Panc1 (cell line): ENCODE measurements at regions of chr10 and their contacts with region 1.

Region 1: DNA sequence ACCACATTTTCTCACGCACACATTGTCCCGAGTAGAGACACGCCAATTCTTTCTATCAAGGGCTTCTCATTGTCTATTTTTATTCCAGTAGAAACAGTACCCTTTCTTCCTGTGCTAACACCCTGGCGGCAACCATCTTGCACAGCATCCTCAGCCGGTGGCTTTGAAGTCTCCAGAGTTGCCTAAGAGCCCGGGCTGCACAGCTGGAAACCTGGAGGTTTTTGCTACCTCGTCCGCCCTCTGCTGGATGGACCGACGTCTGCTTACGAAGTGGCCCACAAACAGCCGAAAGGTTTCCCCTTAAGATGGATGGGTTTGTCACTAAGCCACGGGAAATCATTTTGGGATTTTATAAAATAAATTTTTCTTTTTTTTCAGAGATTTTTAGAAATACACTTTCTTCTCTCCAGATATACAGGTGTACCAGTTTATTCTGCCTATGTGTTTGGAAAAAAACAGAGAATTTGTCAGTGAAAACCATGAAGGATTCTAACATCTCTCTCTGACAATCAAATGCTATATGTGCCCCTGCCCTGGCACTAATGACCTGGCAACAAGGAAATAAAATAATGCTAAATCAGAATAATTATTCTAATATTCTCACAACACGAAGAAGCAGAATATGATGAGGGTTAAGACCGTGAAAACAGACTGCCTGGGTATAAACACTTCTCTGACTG is 81.8 kb upstream of the FAM204A start:
- DNase-seq: peak; percentile 42
- ATAC-seq: peak; percentile 99
- H3K4me3 ChIP-seq: no peak overlapping the region
- H3K27ac ChIP-seq: no peak overlapping the region
- H3K4me1 ChIP-seq: peaks cover 7% of the 10 kb centered on the region; the same call in 1 of the 2 replicates
- H3K27me3 ChIP-seq: peaks cover 19% of the 10 kb centered on the region
- CTCF ChIP-seq: peak; percentile 94

Region 2: GRCh38 chr10:118259288-118259906 is 164.5 kb before region 1 on chr10:
- CTCF ChIA-PET with region 1: interaction called, 4 read pairs
- POLR2A ChIA-PET with region 1: no interaction called
- in situ Hi-C with region 1: no loop called
- intact Hi-C with region 1: loop called (anchors 10 kb)
- DNase-seq: no peak
- ATAC-seq: peak; percentile 85
- H3K4me3 ChIP-seq: no peak overlapping the region
- H3K27ac ChIP-seq: no peak overlapping the region
- H3K4me1 ChIP-seq: no peaks in the 10 kb centered on the region
- H3K27me3 ChIP-seq: peaks cover 60% of the 10 kb centered on the region
- CTCF ChIP-seq: peak; percentile 87

Region 3: DNA sequence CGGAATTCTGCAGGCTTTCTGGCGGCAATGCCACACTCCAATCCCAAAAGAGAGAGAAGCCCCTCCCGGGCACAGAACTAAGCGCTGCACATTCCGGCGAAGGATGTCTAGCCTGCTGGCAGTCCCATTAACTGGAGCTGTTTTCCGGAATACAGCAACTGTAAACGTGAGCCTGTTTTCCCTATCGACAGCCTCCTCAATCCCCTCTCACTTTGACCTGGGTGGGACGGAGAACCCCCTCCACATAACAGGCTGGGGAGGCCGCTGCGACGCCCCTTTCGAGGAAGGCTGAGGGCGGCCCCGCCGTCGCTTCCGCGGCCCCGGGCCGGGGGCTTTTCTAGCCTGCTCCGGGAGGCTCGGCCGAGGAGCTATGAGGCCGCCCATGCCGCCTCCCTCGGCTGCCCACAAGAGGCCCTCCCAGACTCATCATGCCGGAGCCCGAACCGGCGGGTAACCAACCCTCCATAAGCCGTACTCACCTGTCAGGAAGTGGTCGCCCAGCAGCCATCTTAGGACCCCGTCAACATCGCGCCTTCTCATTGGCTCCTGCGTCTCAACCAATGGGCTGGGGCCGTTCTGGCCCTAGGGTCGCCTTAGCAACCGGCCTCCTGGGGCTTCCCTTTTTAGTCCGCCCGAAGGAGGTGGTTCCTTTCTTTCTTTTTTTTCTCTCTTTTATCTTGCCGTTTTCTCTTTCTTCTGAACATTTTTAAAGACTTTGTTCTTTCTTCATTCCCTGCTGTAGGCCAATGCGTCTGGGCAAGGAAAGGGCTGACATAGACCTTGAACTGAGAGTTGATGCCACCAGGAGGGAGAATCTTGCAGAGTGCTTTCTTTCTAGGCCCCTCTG is 81.9 kb before region 1 on chr10 and contains the start of gene FAM204A:
- CTCF ChIA-PET with region 1: no interaction called
- POLR2A ChIA-PET with region 1: no interaction called
- in situ Hi-C with region 1: no loop called
- intact Hi-C with region 1: loop called (anchors 2 kb)
- DNase-seq: peak; percentile 90
- ATAC-seq: peak; percentile 100
- H3K4me3 ChIP-seq: peak within 1 kb of the TSS; percentile 94 to 97
- H3K27ac ChIP-seq: peak within 1 kb of the TSS; percentile 88
- H3K4me1 ChIP-seq: peaks cover 19% of the 10 kb centered on the region
- H3K27me3 ChIP-seq: peaks cover 2% of the 10 kb centered on the region; the same call in 1 of the 2 replicates
- CTCF ChIP-seq: no peak
- total RNA-seq, gene FAM204A: 69.1 TPM

Region 4: GRCh38 chr10:118405928-118406327 is 18.0 kb before region 1 on chr10:
- CTCF ChIA-PET with region 1: no interaction called
- POLR2A ChIA-PET with region 1: no interaction called
- in situ Hi-C with region 1: no loop called
- intact Hi-C with region 1: no loop called
- DNase-seq: no peak
- ATAC-seq: no peak
- H3K4me3 ChIP-seq: no peak overlapping the region
- H3K27ac ChIP-seq: no peak overlapping the region
- H3K4me1 ChIP-seq: no peaks in the 10 kb centered on the region
- H3K27me3 ChIP-seq: peaks cover 21% of the 10 kb centered on the region
- CTCF ChIP-seq: no peak